ENCODE measurements at regions of chr6 and their contacts with region 1.

Region 1: GRCh38 chr6:87393022-87393622 is 14.7 kb upstream of the CFAP206 start:
- DNase-seq: peak; percentile 42 to 72 (median 50)
- ATAC-seq: peak; percentile 91
- H3K4me3 ChIP-seq: no peak overlapping the region
- H3K27ac ChIP-seq: no peak overlapping the region
- H3K4me1 ChIP-seq: no peaks in the 10 kb centered on the region
- H3K27me3 ChIP-seq: no peaks in the 10 kb centered on the region
- CTCF ChIP-seq: peak; percentile 37 to 71 (median 57); a peak in 5 of 6 replicates
- EP300 ChIP-seq: no peak
- POLR2A ChIP-seq: no peak
- RAD21 ChIP-seq: peak; percentile 76 to 82

Region 2: GRCh38 chr6:87066449-87067333 is 326.4 kb before region 1 on chr6:
- CTCF ChIA-PET with region 1: interaction called, 8 read pairs
- POLR2A ChIA-PET with region 1: no interaction called
- in situ Hi-C with region 1: loop called (anchors 10 kb)
- intact Hi-C with region 1: loop called (anchors 1 kb)
- DNase-seq: peak; percentile 31 to 69 (median 40)
- ATAC-seq: 0 out of 3 replicates have a peak, but pooled peaks have one; percentile 40
- H3K4me3 ChIP-seq: no peak overlapping the region
- H3K27ac ChIP-seq: no peak overlapping the region
- H3K4me1 ChIP-seq: no peaks in the 10 kb centered on the region; a peak in 1 of 5 replicates
- H3K27me3 ChIP-seq: no peaks in the 10 kb centered on the region
- CTCF ChIP-seq: peak; percentile 50 to 86 (median 57); a peak in 5 of 6 replicates
- EP300 ChIP-seq: no peak
- POLR2A ChIP-seq: no peak
- RAD21 ChIP-seq: peak; percentile 69 to 86

Region 3: DNA sequence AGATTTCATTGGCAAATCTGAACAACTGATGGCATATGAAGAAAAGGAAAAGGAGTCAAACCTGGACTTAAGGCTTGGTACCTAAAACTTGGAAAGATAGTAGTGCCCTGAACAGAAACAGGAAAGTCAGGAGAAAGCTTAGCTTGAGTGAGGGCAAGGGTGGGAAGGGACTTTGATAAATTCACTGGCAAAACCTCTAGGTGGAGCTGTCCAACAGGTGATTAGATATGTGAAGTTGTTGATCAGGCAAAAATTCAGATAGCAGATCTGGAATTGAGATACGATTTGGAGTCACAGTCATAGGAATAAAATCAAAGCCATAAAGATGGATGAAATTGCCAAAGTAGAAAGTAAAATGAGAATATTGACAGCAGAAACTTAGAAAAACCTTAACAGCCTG is 253.9 kb before region 1 on chr6:
- CTCF ChIA-PET with region 1: interaction called, 3 read pairs
- POLR2A ChIA-PET with region 1: no interaction called
- in situ Hi-C with region 1: no loop called
- intact Hi-C with region 1: loop called (anchors 1 kb)
- DNase-seq: peak; percentile 12 to 45 (median 24)
- ATAC-seq: peak; percentile 70; the same call in 2 of the 3 replicates
- H3K4me3 ChIP-seq: no peak overlapping the region
- H3K27ac ChIP-seq: no peak overlapping the region
- H3K4me1 ChIP-seq: no peaks in the 10 kb centered on the region
- H3K27me3 ChIP-seq: no peaks in the 10 kb centered on the region
- CTCF ChIP-seq: peak; percentile 38 to 67 (median 64); a peak in 5 of 6 replicates
- EP300 ChIP-seq: no peak
- POLR2A ChIP-seq: no peak
- RAD21 ChIP-seq: peak; percentile 34 to 75

Region 4: GRCh38 chr6:87277123-87277522 is 116.0 kb before region 1 on chr6:
- CTCF ChIA-PET with region 1: interaction called, 21 read pairs
- POLR2A ChIA-PET with region 1: no interaction called
- in situ Hi-C with region 1: no loop called
- intact Hi-C with region 1: loop called (anchors 1 kb)
- DNase-seq: peak in 2 of 4 experiments; percentile 25 to 55
- ATAC-seq: peak; percentile 94
- H3K4me3 ChIP-seq: no peak overlapping the region
- H3K27ac ChIP-seq: no peak overlapping the region
- H3K4me1 ChIP-seq: no peaks in the 10 kb centered on the region
- H3K27me3 ChIP-seq: peaks cover 3 to 5% of the 10 kb centered on the region in 2 experiments; a peak in 3 of 5 replicates
- CTCF ChIP-seq: peak; percentile 44 to 78 (median 55); a peak in 5 of 6 replicates
- EP300 ChIP-seq: no peak
- POLR2A ChIP-seq: no peak
- RAD21 ChIP-seq: peak; percentile 76 to 94

Region 5: DNA sequence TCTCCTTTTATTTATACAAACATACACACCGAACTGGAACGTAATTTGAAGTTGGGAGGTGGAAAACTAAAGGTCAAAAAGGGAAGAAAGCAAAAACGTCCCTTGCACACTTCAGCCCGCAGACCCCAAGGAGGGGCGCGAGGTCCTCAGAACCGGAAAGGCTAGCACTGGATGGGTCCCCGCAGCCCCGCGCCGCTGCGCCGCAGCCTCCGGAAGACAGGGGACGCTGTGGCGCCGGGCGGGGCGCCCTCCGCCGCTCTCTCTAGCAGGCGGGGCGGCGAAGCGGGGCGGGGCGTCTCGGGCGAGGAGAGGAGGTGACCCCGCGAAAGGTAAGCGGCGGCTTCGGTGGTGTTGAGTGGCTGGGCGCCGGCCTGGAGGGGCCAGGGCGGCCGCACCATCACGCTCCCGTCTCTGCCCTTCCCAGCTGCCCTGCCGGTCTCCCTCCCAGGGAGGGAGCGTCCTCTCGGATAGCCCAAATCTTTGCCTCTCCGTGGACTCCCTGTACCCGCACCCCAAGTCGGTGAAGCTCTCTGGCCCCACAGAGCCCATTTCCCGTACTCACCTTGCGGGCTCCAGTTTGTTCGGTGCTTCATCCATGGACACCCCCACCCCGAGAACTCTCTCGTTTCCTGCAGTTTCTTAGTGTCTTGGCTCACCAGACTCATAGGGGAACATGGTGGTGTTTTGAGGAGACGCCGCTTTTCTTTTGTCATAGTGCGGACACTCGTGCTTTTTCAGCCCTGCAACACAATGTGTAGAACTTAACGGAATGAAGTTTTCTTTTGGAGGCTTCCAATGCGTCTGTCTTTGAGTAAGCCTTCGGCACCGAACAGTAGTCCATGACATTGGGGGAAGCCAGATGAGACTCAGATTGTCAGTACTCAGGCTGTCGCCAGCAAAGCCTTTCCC is 70.6 kb before region 1 on chr6 and contains the start of gene SMIM8:
- CTCF ChIA-PET with region 1: no interaction called
- POLR2A ChIA-PET with region 1: no interaction called
- in situ Hi-C with region 1: no loop called
- intact Hi-C with region 1: loop called (anchors 1 kb)
- DNase-seq: peak; percentile 92 to 93 (median 92)
- ATAC-seq: peak; percentile 98
- H3K4me3 ChIP-seq: peak within 1 kb of the TSS; percentile 91
- H3K27ac ChIP-seq: peak within 1 kb of the TSS; percentile 86
- H3K4me1 ChIP-seq: peaks cover 0 to 3% of the 10 kb centered on the region in 2 experiments; a peak in 3 of 5 replicates
- H3K27me3 ChIP-seq: no peaks in the 10 kb centered on the region
- CTCF ChIP-seq: peak; percentile 94 to 96 (median 96)
- EP300 ChIP-seq: peak; percentile 34; the same call in 1 of the 2 replicates
- POLR2A ChIP-seq: peak; percentile 93
- RAD21 ChIP-seq: peak in 1 of 2 experiments; percentile 51; a peak in 3 of 4 replicates
- polyA plus RNA-seq, gene SMIM8: 51.0 to 53.7 TPM

Region 6: GRCh38 chr6:87575423-87575822 is 182.3 kb after region 1 on chr6:
- CTCF ChIA-PET with region 1: no interaction called
- POLR2A ChIA-PET with region 1: no interaction called
- in situ Hi-C with region 1: no loop called
- intact Hi-C with region 1: no loop called
- DNase-seq: no peak
- ATAC-seq: peak; percentile 14; the same call in 2 of the 3 replicates
- H3K4me3 ChIP-seq: no peak overlapping the region
- H3K27ac ChIP-seq: no peak overlapping the region
- H3K4me1 ChIP-seq: peaks cover 0 to 7% of the 10 kb centered on the region in 2 experiments; a peak in 3 of 5 replicates
- H3K27me3 ChIP-seq: no peaks in the 10 kb centered on the region
- CTCF ChIP-seq: no peak
- EP300 ChIP-seq: no peak
- POLR2A ChIP-seq: no peak
- RAD21 ChIP-seq: no peak